ENCODE measurements at regions of chrX and their contacts with region 1.

Region 1: DNA sequence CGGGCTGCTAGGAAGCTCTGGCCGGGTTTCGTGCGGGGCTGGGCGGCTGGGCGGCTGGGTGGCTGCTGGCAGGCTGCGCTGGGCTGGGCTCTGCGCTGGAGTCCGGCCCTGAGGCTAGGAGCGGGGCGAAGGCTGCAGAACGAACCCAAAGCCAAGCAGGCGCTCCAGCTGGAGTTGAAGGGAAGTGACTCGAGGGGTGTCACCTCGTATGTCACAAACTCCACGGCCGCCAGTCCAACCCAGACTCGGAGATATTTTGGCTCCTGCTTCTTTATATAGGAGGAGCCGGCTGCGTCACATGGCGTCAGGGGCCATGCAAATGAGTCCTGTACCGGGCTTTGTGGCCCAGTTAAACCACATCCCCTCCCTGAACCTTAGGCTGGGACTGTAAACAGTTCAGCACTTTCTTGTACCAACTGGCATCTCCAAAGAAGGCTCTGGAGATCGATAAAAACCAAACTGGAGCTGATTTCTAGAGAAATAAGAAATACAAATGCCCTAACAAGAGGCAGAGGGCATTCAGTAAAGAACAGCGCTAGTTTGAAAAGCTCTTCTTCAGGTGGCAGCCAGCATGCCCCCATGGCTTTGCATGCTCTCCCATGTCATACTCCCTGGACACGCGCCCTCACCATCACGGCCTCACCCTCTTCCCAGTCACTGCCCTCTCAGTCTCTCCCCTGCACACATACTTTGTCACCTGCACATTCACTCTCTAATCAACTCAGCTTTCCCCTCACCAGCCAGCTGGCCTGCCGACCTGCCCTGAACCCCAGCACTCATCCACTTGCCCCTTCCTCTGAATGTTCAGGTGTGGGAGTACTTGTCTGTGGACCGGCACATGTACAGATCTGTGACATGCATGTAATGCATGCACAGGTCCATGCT is 58.5 kb downstream of the TSC22D3 start:
- DNase-seq: peak; percentile 87 to 92
- ATAC-seq: peak; percentile 58 to 85 (median 80)
- H3K4me3 ChIP-seq: peak overlapping the region; percentile 99
- H3K4me3 Mint-ChIP-seq: peak overlapping the region; percentile 97
- H3K27ac ChIP-seq: peak overlapping the region; percentile 100
- H3K27ac Mint-ChIP-seq: peak overlapping the region; percentile 99
- H3K4me1 ChIP-seq: peaks cover 60% of the 10 kb centered on the region
- H3K4me1 Mint-ChIP-seq: peaks cover 45 to 51% of the 10 kb centered on the region in 2 donors
- H3K27me3 ChIP-seq: no peaks in the 10 kb centered on the region
- H3K27me3 Mint-ChIP-seq: peaks cover 3 to 8% of the 10 kb centered on the region in 2 donors
- CTCF ChIP-seq: no peak

Region 2: DNA sequence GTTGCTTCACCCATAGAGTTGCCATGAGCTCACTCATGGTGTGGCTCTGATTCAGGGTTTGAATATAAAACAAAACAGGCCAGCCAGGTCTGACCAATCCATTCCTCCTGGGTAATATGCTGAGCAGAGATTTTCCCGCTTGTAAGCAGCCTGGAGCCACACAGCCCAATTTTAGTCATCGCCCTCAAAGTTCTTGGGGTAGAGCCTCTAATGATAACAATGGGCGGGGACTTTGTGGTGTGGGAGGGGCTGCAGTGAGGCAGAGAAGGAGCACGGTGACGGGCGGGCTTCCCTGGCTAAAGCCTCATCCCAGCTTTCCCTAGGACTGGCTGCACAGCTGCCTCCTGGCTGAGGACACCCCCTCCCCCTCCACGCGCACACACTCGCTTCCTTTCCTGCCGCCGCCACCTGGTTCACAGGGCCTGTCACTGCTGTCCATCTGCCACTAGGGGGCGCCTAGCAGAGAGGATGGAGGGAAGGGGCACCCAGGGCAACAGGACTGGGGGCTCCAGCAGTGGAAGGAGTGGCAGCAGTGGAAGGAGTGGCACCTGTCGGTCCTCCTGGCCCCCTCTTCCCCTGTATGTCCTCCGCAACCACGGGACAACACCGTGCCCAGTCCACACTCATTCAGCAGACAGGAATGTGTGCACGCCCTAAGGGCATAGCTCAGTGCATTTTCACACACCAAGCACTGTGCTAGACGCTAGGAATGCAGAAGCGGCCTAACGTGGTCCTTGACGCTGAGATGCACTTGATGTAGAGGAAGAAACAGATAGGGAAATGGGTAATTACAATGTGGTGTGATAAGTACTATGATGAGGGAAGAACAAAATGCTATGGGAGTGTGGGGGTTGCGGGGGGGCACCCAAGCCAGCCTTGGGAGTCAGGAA is 61.9 kb before region 1 on chrX:
- intact Hi-C with region 1: loop called (anchors 5 kb)
- DNase-seq: peak; percentile 52 to 82
- ATAC-seq: peak; percentile 87 to 91 (median 89)
- H3K4me3 ChIP-seq: no peak overlapping the region
- H3K4me3 Mint-ChIP-seq: no peak overlapping the region
- H3K27ac ChIP-seq: no peak overlapping the region
- H3K27ac Mint-ChIP-seq: no peak overlapping the region
- H3K4me1 ChIP-seq: peaks cover 4% of the 10 kb centered on the region
- H3K4me1 Mint-ChIP-seq: peaks cover 0 to 5% of the 10 kb centered on the region in 2 donors
- H3K27me3 ChIP-seq: no peaks in the 10 kb centered on the region
- H3K27me3 Mint-ChIP-seq: no peaks in the 10 kb centered on the region
- CTCF ChIP-seq: peak; percentile 64

Region 3: GRCh38 chrX:107672955-107673378 is 44.1 kb before region 1 on chrX:
- intact Hi-C with region 1: loop called (anchors 1 kb)
- DNase-seq: peak; percentile 57 to 93
- ATAC-seq: peak; percentile 60 to 77 (median 67)
- H3K4me3 ChIP-seq: no peak overlapping the region
- H3K4me3 Mint-ChIP-seq: peak overlapping the region; percentile 81
- H3K27ac ChIP-seq: peak overlapping the region; percentile 100
- H3K27ac Mint-ChIP-seq: peak overlapping the region; percentile 90 to 95
- H3K4me1 ChIP-seq: peaks cover 47% of the 10 kb centered on the region
- H3K4me1 Mint-ChIP-seq: peaks cover 29 to 38% of the 10 kb centered on the region in 2 donors
- H3K27me3 ChIP-seq: no peaks in the 10 kb centered on the region
- H3K27me3 Mint-ChIP-seq: peaks cover 0 to 15% of the 10 kb centered on the region in 2 donors
- CTCF ChIP-seq: peak; percentile 58

Region 4: DNA sequence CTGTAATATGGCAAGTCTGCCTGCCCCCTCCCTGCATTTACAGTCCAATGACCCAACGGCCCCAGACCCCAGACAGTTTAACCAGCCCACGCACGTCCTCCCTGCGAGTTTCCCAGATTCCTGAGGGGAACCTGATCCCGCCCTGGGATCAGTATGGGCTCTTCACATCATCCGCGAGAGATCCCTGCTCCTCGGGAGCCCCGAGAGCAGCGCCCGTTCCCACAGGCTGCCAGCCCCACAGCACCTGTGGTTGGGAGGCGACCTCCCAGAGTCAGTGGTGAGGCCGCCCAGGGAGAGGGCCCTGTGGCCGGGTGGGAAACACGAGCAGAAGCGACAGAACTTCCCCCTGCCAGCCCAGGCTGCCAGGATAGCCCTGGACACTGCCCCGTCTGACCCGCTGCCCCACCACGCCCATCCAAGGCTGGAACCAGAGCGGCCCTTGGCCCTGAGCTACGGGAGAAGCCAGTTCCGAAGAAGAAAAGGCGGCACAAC is 25.7 kb after region 1 on chrX:
- intact Hi-C with region 1: loop called (anchors 2 kb)
- DNase-seq: no peak
- ATAC-seq: no peak
- H3K4me3 ChIP-seq: no peak overlapping the region
- H3K4me3 Mint-ChIP-seq: peak overlapping the region; percentile 85
- H3K27ac ChIP-seq: peak overlapping the region; percentile 62
- H3K27ac Mint-ChIP-seq: peak overlapping the region; percentile 91 to 94
- H3K4me1 ChIP-seq: peaks cover 29% of the 10 kb centered on the region
- H3K4me1 Mint-ChIP-seq: peaks cover 28 to 29% of the 10 kb centered on the region in 2 donors
- H3K27me3 ChIP-seq: no peaks in the 10 kb centered on the region
- H3K27me3 Mint-ChIP-seq: no peaks in the 10 kb centered on the region
- CTCF ChIP-seq: no peak

Measured in natural killer cell (primary cell).